ENCODE measurements at regions of chr5 and their contacts with region 1.

Region 1: GRCh38 chr5:10563945-10564837 is at the start of gene ANKRD33B:
- DNase-seq: peak; percentile 91
- ATAC-seq: peak; percentile 74
- H3K4me3 ChIP-seq: peak within 1 kb of the TSS; percentile 64 to 84 (median 75)
- H3K4me3 Mint-ChIP-seq: peak within 1 kb of the TSS; percentile 93
- H3K27ac ChIP-seq: peak within 1 kb of the TSS; percentile 76 to 96
- H3K27ac Mint-ChIP-seq: peak within 1 kb of the TSS; percentile 90
- H3K4me1 ChIP-seq: peaks cover 42 to 51% of the 10 kb centered on the region in 2 donors
- H3K4me1 Mint-ChIP-seq: peaks cover 61% of the 10 kb centered on the region
- H3K27me3 ChIP-seq: no peaks in the 10 kb centered on the region
- H3K27me3 Mint-ChIP-seq: no peaks in the 10 kb centered on the region
- CTCF ChIP-seq: no peak
- total RNA-seq, gene ANKRD33B: 23.4 and 24.8 TPM in 2 replicates

Region 2: DNA sequence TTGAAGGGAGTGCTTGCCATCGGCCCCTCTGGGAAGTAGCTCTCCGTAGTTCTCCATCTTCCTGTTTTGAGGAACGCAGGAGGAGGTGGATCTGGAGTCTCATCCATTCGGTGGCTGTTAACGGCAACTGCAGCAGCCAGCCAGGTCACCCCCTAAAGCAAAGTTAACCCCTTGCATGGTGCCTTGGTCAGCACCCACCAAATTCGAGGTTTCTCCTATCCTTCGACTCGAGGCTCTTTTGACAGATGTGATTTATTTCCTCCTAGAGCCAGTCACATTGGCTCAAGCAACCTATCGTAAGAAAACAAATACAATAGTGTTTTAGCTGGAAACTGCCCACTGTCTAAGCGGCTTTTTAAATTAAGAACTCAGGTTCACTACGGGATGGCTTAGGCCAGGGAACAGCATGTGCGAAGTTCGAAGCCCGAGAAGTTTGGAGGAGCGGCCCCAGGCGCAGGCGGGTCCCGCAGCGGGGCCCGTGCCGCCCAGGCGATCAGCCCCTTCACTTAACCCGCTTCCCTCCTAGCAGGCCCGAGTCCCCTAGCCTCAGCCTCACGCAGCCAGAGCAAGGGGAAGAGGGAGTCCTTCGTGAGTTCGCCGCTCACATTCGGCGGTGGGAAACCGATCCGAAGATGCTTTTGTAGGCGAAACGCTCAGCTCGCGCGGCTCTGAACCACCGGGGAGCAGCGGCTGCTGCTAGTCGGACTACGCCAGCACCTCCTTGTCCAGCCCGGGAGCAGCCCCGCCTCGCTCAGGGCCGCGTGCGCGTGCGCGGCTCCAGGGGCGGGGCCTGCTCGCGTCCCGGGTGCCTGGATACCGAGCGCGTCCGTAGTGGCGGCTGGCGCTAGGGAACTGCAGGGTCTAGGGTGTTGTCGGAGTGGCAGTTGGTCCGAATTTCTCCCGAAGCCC is 122.9 kb before region 1 on chr5 and contains the start of gene ROPN1L:
- CTCF ChIA-PET with region 1: no interaction called
- POLR2A ChIA-PET with region 1: no interaction called
- intact Hi-C with region 1: loop called (anchors 5 kb)
- DNase-seq: peak; percentile 86
- ATAC-seq: peak; percentile 95
- H3K4me3 ChIP-seq: peak within 1 kb of the TSS; percentile 66 to 85 (median 70)
- H3K4me3 Mint-ChIP-seq: peak within 1 kb of the TSS; percentile 93
- H3K27ac ChIP-seq: no peak within 1 kb of the TSS
- H3K27ac Mint-ChIP-seq: peak within 1 kb of the TSS; percentile 59
- H3K4me1 ChIP-seq: peaks cover 27 to 41% of the 10 kb centered on the region in 2 donors
- H3K4me1 Mint-ChIP-seq: peaks cover 35% of the 10 kb centered on the region
- H3K27me3 ChIP-seq: peaks cover 0 to 5% (median 0%) of the 10 kb centered on the region in 4 experiments
- H3K27me3 Mint-ChIP-seq: peaks cover 4% of the 10 kb centered on the region
- CTCF ChIP-seq: no peak
- total RNA-seq, gene ROPN1L: 0.34 and 0.91 TPM in 2 replicates

Region 3: DNA sequence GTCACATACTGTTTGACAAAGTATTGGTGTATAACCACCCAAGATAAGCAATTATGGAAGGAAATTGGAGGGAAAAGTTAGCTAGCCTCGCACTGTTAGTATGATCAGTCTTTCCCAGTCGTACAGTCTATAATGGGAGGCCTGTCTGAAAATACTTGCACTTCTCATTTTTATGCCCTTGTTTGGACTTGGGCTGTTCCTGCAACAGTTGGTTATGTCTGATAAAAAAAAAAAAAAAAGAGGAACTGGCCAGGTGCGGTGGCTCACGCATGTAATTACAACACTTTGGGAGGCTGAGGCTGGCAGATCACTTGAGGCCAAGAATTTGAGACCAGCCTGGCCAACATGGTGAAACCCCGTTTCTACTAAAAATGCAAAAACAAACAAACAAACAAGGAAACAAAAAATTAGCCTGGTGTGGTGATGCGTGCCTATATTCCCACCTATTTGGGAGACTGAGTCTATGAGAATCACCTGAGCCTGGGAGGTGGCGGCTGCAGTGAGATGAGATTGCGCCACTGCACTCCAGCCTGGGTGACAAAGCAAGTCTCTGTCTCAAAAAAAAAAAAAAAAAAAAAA is 58.6 kb before region 1 on chr5:
- CTCF ChIA-PET with region 1: no interaction called
- POLR2A ChIA-PET with region 1: no interaction called
- intact Hi-C with region 1: loop called (anchors 5 kb)
- DNase-seq: peak; percentile 84
- ATAC-seq: peak; percentile 94
- H3K4me3 ChIP-seq: no peak overlapping the region
- H3K4me3 Mint-ChIP-seq: no peak overlapping the region
- H3K27ac ChIP-seq: peak overlapping the region; percentile 27 to 32
- H3K27ac Mint-ChIP-seq: peak overlapping the region; percentile 65
- H3K4me1 ChIP-seq: peaks cover 15 to 16% of the 10 kb centered on the region in 2 donors
- H3K4me1 Mint-ChIP-seq: peaks cover 19% of the 10 kb centered on the region
- H3K27me3 ChIP-seq: no peaks in the 10 kb centered on the region
- H3K27me3 Mint-ChIP-seq: no peaks in the 10 kb centered on the region
- CTCF ChIP-seq: no peak

Region 4: GRCh38 chr5:10536931-10537579 is 27.1 kb before region 1 on chr5:
- CTCF ChIA-PET with region 1: no interaction called
- POLR2A ChIA-PET with region 1: no interaction called
- intact Hi-C with region 1: loop called (anchors 2 kb)
- DNase-seq: peak; percentile 70
- ATAC-seq: peak; percentile 65
- H3K4me3 ChIP-seq: peak overlapping the region; percentile 9 to 49 (median 31)
- H3K4me3 Mint-ChIP-seq: peak overlapping the region; percentile 83
- H3K27ac ChIP-seq: peak overlapping the region; percentile 35 to 54
- H3K27ac Mint-ChIP-seq: peak overlapping the region; percentile 75
- H3K4me1 ChIP-seq: peaks cover 20 to 40% of the 10 kb centered on the region in 2 donors
- H3K4me1 Mint-ChIP-seq: peaks cover 32% of the 10 kb centered on the region
- H3K27me3 ChIP-seq: peaks cover 0 to 4% (median 0%) of the 10 kb centered on the region in 4 experiments
- H3K27me3 Mint-ChIP-seq: peaks cover 8% of the 10 kb centered on the region
- CTCF ChIP-seq: no peak

Region 5: GRCh38 chr5:10577371-10578292 is 13.4 kb after region 1 on chr5:
- CTCF ChIA-PET with region 1: interaction called, 13 read pairs
- POLR2A ChIA-PET with region 1: interaction called, 10 read pairs
- intact Hi-C with region 1: loop called (anchors 1 kb)
- DNase-seq: peak; percentile 12
- ATAC-seq: no peak
- H3K4me3 ChIP-seq: no peak overlapping the region
- H3K4me3 Mint-ChIP-seq: peak overlapping the region; percentile 52
- H3K27ac ChIP-seq: no peak overlapping the region
- H3K27ac Mint-ChIP-seq: peak overlapping the region; percentile 64
- H3K4me1 ChIP-seq: peaks cover 59 to 60% of the 10 kb centered on the region in 2 donors
- H3K4me1 Mint-ChIP-seq: peaks cover 81% of the 10 kb centered on the region
- H3K27me3 ChIP-seq: no peaks in the 10 kb centered on the region
- H3K27me3 Mint-ChIP-seq: no peaks in the 10 kb centered on the region
- CTCF ChIP-seq: no peak

Region 6: GRCh38 chr5:10607666-10608073 is 43.5 kb after region 1 on chr5:
- CTCF ChIA-PET with region 1: interaction called, 5 read pairs
- POLR2A ChIA-PET with region 1: interaction called, 8 read pairs
- intact Hi-C with region 1: loop called (anchors 1 kb)
- DNase-seq: peak; percentile 76
- ATAC-seq: peak; percentile 26
- H3K4me3 ChIP-seq: peak overlapping the region in 4 of 5 experiments; percentile 23 to 59 (median 40)
- H3K4me3 Mint-ChIP-seq: peak overlapping the region; percentile 82
- H3K27ac ChIP-seq: peak overlapping the region; percentile 45 to 73
- H3K27ac Mint-ChIP-seq: peak overlapping the region; percentile 86
- H3K4me1 ChIP-seq: peaks cover 25 to 30% of the 10 kb centered on the region in 2 donors
- H3K4me1 Mint-ChIP-seq: peaks cover 49% of the 10 kb centered on the region
- H3K27me3 ChIP-seq: no peaks in the 10 kb centered on the region
- H3K27me3 Mint-ChIP-seq: no peaks in the 10 kb centered on the region
- CTCF ChIP-seq: no peak